HAP-1 (cell line): ENCODE measurements at regions of chr1 and their contacts with region 1.

Region 1: GRCh38 chr1:110780600-110781484 is 92.1 kb upstream of the CD53 start:
- DNase-seq: peak; percentile 61 to 78
- H3K4me3 ChIP-seq: no peak overlapping the region
- H3K4me1 ChIP-seq: no peaks in the 10 kb centered on the region
- H3K27me3 ChIP-seq: no peaks in the 10 kb centered on the region; the same call in 1 of the 2 replicates

Region 2: DNA sequence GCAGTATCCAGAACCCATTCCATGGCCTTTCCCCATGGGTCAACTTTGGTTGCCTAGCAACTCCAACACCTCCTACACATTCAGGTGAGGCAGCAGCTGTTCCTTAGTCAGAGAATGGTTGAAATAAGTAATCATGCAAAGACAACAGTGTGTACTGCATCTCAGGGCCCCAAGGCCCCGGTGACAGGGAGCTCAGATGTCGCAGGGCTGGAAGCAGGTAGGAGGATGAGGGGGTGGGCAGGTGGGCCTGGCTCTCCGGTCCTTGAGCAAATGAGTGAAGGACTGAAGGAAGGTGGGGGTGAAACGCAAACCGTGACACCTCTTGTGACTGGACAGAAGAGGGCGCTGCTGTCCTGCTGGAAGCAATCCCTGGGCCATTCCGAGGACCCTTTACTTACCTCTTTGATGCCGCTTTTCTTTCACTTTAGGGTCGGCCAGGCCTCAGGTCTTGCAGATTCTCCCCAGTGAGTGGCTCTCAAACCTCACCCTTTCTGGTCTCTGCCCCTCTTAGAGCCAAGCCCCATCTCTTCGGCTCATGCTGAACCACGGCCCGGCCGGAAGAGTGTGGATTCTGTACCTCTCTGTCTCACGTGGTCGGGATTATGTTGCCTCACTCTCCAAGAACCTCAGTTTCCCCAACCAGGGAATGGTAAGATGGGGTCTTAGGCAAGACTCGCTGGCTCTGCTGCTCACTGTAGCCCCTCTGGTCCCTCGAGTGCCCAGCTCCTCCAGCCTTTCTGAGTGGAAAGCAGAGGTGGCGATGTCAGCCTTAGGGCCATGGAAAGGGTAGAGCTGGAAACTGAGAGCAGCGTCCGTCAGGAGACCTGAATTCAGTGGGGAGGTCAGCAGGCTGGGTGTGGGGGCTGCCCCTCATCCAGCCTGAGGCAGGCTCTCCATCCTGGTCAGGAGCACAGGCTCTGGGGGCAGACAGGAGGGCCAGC is 256.3 kb before region 1 on chr1:
- in situ Hi-C with region 1: loop called (anchors 10 kb)
- DNase-seq: peak; percentile 63 to 74
- H3K4me3 ChIP-seq: no peak overlapping the region
- H3K4me1 ChIP-seq: no peaks in the 10 kb centered on the region
- H3K27me3 ChIP-seq: 0 out of 2 replicates have a peak, but pooled peaks cover 8% of the 10 kb centered on the region

Region 3: DNA sequence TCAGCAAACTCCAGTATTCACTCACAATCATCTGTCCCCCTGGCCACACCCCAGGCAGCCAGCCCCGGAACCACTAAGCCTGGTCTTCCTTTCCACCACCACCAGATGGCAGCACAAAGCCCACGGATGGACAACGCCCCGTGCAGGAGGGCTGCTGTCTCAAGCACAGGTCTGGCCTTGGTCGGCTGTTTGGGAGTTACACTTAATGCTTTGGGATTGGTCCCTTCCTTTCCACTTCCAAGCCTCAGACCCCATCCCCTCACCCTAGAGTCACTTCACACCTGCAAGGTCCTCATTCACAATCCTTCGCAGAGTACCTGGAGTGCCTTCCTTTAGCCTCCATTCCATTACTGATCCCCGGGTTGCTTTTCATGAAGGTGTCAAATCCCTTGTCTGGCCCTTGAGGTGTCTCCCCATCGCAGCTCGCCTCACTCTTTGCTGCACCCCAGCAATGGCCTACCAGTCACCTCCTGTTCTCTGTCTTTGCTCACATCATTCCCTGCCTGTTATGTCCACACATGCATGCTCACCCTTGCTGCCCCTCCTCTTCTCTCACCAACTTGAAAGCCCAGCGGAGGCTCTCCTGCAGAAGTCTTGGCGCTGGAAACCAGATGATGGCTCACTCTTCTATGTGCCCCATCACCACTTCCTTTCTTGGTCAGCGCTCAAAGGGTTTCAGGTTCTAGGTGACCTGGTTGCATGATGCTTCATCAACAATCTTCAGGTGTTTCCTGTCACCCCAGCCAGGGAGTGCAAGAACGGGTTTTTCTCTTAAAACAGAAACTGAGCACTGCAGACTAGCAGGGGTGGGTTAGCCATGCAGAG is 149.8 kb before region 1 on chr1:
- in situ Hi-C with region 1: loop called (anchors 5 kb)
- DNase-seq: peak; percentile 48 to 82
- H3K4me3 ChIP-seq: no peak overlapping the region
- H3K4me1 ChIP-seq: no peaks in the 10 kb centered on the region
- H3K27me3 ChIP-seq: peaks cover 6% of the 10 kb centered on the region; the same call in 1 of the 2 replicates